ENCODE measurements at regions of chr11 and their contacts with region 1.

Region 1: DNA sequence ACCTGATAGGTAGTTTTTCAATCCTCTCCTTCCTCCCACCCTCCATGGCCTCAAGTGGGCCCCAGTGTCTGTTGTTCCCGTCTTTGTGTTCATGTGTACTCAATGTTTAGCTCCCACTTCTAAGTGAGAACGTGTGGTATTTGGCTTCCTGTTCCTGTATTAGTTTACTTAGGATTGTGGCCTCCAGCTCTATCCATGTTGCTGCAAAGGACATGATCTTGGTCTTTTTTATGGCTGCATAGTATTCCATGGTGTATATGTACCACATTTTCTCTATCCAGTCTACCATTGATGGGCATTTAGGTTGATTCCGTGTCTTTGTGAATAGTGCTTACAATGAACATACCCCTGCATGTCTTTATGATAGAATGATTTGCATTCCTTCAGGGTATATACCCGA is 54.1 kb upstream of the CFAP300 start:
- DNase-seq: no peak
- ATAC-seq: no peak
- H3K4me3 ChIP-seq: no peak overlapping the region
- H3K27ac ChIP-seq: no peak overlapping the region
- H3K4me1 ChIP-seq: no peaks in the 10 kb centered on the region
- H3K27me3 ChIP-seq: no peaks in the 10 kb centered on the region

Region 2: DNA sequence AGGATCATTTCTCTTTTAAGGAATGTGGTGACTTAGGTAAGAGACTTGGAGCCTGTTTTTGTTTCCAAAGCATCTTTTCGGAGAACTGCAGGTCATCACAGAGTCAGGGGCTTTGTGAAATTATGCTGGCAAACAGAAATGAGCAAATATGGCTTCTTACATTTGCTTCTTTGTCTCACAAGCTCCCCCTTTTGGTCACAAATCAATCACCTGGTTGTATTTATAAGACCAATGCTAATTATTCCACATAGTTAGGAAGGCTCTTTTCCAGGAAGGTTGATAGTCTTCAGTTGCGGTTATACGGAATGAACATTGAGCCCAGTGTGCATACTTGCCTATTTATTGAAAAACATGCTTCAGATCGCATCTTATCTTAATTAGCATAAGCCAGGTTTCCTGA is 113.0 kb before region 1 on chr11:
- intact Hi-C with region 1: loop called in 1 of 2 experiments (anchors 5 kb)
- DNase-seq: no peak
- ATAC-seq: no peak
- H3K4me3 ChIP-seq: no peak overlapping the region
- H3K27ac ChIP-seq: no peak overlapping the region
- H3K4me1 ChIP-seq: no peaks in the 10 kb centered on the region
- H3K27me3 ChIP-seq: no peaks in the 10 kb centered on the region

Measured in aorta (tissue), 5 donors.